ENCODE measurements at regions of chr10 and their contacts with region 1.

Region 1: DNA sequence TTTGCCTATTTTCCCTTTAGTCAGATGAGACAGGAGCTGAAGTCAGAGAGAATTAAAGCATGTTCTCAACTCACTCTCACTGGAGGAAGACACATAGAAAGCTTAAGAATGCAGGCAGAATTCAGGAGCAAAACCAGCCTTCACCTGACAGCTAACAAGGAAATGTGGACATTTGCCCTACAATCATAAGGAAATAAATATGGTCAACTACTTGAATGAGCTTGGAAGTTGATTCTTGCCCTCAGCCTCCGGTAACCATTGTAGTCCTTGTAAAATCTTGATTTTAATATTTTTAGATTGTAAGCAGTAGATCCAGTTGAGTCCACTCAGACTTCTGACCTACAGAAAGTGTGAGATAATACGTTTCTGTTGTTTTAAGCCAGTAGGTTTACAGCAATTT is 752.5 kb upstream of the ZWINT start:
- DNase-seq: no peak
- H3K4me3 Mint-ChIP-seq: no peak overlapping the region
- H3K27ac Mint-ChIP-seq: no peak overlapping the region
- H3K4me1 Mint-ChIP-seq: no peaks in the 10 kb centered on the region
- H3K27me3 Mint-ChIP-seq: no peaks in the 10 kb centered on the region
- CTCF ChIP-seq: no peak

Region 2: DNA sequence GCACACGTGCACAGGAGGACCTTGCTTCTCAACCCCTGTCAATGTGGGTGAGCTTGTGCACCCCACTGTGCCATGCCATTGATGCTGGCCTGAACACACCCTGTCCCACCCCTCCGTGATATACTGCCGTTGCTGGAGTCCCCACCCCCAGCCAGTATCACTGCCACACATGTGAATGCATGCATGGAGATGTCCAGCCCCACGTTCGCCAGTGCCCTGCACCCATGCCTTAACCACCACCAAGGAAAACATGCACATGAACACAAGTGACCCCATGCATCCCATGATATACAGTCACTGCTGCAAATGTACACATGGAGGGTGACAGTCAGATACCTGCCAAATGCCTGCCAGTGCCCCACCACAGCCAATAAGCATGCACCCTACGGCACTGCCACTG is 60.0 kb before region 1 on chr10:
- CTCF ChIA-PET with region 1: no interaction called
- POLR2A ChIA-PET with region 1: no interaction called
- intact Hi-C with region 1: loop called (anchors 5 kb)
- DNase-seq: no peak
- H3K4me3 Mint-ChIP-seq: no peak overlapping the region
- H3K27ac Mint-ChIP-seq: no peak overlapping the region
- H3K4me1 Mint-ChIP-seq: no peaks in the 10 kb centered on the region
- H3K27me3 Mint-ChIP-seq: no peaks in the 10 kb centered on the region
- CTCF ChIP-seq: no peak

Region 3: GRCh38 chr10:57186201-57186600 is 72.7 kb after region 1 on chr10:
- CTCF ChIA-PET with region 1: no interaction called
- POLR2A ChIA-PET with region 1: no interaction called
- intact Hi-C with region 1: no loop called
- DNase-seq: no peak
- H3K4me3 Mint-ChIP-seq: no peak overlapping the region
- H3K27ac Mint-ChIP-seq: no peak overlapping the region
- H3K4me1 Mint-ChIP-seq: no peaks in the 10 kb centered on the region
- H3K27me3 Mint-ChIP-seq: peaks cover 23% of the 10 kb centered on the region
- CTCF ChIP-seq: no peak